ENCODE measurements at regions of chr18 and their contacts with region 1.

Region 1: GRCh38 chr18:4333043-4333442 is 122.1 kb downstream of the DLGAP1 start:
- DNase-seq: no peak
- ATAC-seq: no peak
- H3K4me3 ChIP-seq: no peak overlapping the region
- H3K27ac ChIP-seq: no peak overlapping the region
- H3K4me1 ChIP-seq: no peaks in the 10 kb centered on the region
- H3K27me3 ChIP-seq: no peaks in the 10 kb centered on the region
- CTCF ChIP-seq: no peak
- POLR2A ChIP-seq: no peak

Region 2: DNA sequence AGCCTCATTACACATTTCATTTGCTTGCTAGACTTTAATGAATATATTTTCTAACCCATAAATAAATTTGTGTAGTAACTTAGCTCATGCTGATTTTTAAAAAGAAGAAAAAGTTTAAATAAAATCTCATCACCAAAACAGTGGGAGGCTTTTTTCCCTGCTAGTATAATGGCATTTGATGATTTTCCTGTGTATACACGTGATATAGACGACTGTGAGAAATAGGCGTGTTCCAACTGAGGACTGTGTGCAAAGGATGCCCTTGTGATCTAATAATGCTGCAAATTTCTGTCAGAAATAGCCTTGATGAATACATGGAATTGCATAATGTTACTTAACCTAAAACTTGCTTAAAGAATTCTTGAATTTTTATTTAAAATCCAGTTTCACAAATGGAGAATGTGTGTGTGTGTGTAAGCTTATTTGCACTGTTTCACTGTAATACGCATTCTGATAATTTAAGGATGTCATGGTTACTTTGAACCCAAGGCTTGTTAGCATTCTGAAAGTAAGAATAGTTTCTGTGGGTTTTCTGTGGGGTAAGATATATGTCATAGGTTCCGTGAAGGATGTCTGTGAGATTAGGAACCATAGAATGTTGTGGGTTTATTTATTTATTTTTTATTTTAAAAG is 56.0 kb before region 1 on chr18:
- in situ Hi-C with region 1: loop called in 1 of 4 experiments (anchors 10 kb)
- intact Hi-C with region 1: no loop called
- DNase-seq: no peak
- ATAC-seq: no peak
- H3K4me3 ChIP-seq: no peak overlapping the region
- H3K27ac ChIP-seq: no peak overlapping the region
- H3K4me1 ChIP-seq: no peaks in the 10 kb centered on the region
- H3K27me3 ChIP-seq: no peaks in the 10 kb centered on the region
- CTCF ChIP-seq: no peak
- POLR2A ChIP-seq: no peak